Heart right ventricle (tissue), 16 donors: ENCODE measurements at regions of chr7 and their contacts with region 1.

Region 1: DNA sequence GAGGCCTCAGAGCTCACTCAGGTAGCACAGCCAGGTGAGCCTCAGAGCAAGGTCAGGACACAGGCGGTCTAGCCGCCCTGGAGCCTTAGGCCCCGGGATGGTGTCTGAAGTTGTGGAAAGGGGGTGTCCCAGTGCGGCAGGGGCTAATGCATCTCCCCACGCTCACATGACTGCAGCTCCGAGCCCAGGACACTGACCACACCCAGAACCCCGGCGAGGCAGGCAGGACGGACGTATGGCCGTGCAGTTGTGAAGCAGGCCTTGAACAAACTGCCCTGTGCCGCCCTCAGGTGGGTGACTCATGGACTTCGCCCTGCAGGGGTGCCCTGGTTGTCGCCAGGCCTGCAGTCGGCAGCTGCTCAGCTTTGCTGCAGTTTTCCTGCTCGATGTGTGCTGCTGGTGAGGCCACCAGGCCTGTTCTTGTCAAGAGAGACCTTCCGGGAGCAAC is 5.0 kb upstream of the PRKAR1B start:
- DNase-seq: peak; percentile 58 to 66
- ATAC-seq: peak; percentile 65 to 89 (median 82)
- H3K4me3 ChIP-seq: no peak overlapping the region
- H3K27ac ChIP-seq: peak overlapping the region; percentile 33 to 94 (median 88)
- H3K4me1 ChIP-seq: peaks cover 6 to 39% (median 26%) of the 10 kb centered on the region in 9 donors
- H3K27me3 ChIP-seq: no peaks in the 10 kb centered on the region
- CTCF ChIP-seq: peak in 8 of 9 donors; percentile 13 to 73 (median 48)

Region 2: DNA sequence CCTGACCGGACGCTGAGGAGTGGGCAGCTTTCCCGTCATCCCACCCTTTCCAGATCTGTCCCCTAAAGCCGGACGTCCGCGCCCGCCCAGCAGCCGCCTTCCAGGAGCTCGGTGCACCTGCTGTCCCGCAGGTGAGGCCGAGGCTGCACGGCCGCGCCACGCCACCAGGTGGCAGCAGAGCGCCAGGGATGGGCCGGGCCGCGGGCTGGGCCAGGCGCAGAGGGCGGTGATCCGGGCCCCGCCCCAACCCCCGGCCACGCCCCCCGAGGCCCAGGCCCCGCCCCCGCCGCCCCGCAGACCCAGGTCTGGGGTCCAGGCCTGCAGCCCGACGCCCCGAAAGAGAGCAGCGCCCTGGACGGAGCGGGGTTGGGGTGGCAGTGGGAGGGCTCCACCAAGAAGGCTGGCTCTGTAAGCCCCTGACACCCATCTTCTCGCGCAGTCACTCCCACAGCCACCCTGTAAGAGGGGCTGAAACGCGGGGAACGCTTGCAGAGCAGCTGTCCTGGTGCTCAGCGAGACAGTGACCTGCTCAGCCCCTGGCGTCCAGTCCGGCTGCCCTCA is 409.9 kb before region 1 on chr7:
- intact Hi-C with region 1: loop called in 1 of 10 experiments (anchors 5 kb)
- DNase-seq: peak; percentile 48 to 79
- ATAC-seq: peak; percentile 65 to 90 (median 80)
- H3K4me3 ChIP-seq: peak overlapping the region in 1 of 10 donors; percentile 20
- H3K27ac ChIP-seq: no peak overlapping the region
- H3K4me1 ChIP-seq: peaks cover 0 to 33% (median 5%) of the 10 kb centered on the region in 9 donors
- H3K27me3 ChIP-seq: peaks cover 0 to 25% (median 15%) of the 10 kb centered on the region in 7 donors
- CTCF ChIP-seq: peak; percentile 84 to 98 (median 95)

Region 3: DNA sequence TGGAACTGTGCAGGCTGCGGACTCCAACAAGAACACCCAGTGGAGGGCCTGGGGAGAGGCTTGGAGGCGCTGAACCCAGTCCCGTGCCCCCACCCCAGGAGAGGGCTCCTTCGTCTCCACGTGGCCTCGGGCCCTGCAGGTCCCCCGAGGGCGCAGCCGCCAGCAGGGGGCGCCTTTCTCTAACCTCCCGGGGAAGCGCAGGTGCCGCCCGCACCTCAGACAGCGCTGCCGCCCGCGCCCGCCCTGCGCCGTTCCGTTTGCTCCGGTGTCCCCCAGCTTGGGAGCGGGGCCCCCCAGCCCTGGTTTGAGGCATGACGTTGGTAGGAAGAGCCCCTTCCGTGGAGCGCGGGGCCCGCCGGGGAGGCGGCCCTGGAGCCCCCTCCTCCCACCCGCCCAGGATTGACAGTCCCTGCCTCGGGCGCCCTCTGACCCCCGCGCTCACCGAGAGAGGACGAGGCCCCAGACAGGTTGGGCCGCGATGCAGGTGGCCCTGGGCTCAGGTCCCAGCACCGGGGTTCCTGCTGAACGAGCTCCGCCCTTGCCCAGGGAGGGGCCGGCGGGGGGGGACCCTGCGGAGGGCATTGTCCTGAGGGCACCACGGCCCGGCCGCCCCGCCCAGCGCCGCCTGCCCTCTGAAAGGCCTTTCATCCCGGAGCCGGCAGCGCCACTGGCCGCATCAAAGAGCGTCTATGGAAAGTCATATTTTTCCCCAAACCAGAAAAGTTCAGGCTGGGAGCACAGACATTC is 399.3 kb before region 1 on chr7:
- intact Hi-C with region 1: loop called in 5 of 10 experiments (anchors 2 to 5 kb)
- DNase-seq: peak; percentile 75 to 86
- ATAC-seq: peak; percentile 86 to 94 (median 90)
- H3K4me3 ChIP-seq: peak overlapping the region in 9 of 10 donors; percentile 37 to 56 (median 50)
- H3K27ac ChIP-seq: peak overlapping the region; percentile 24 to 85 (median 76)
- H3K4me1 ChIP-seq: peaks cover 4 to 17% (median 12%) of the 10 kb centered on the region in 9 donors
- H3K27me3 ChIP-seq: peaks cover 0 to 15% (median 4%) of the 10 kb centered on the region in 7 donors
- CTCF ChIP-seq: peak; percentile 78 to 95 (median 91)

Region 4: GRCh38 chr7:471866-472639 is 260.1 kb before region 1 on chr7:
- intact Hi-C with region 1: no loop called
- DNase-seq: peak; percentile 83 to 84
- ATAC-seq: peak; percentile 67 to 94 (median 89)
- H3K4me3 ChIP-seq: no peak overlapping the region
- H3K27ac ChIP-seq: peak overlapping the region in 9 of 10 donors; percentile 17 to 72 (median 53)
- H3K4me1 ChIP-seq: peaks cover 6 to 25% (median 13%) of the 10 kb centered on the region in 9 donors
- H3K27me3 ChIP-seq: no peaks in the 10 kb centered on the region
- CTCF ChIP-seq: no peak

Region 5: DNA sequence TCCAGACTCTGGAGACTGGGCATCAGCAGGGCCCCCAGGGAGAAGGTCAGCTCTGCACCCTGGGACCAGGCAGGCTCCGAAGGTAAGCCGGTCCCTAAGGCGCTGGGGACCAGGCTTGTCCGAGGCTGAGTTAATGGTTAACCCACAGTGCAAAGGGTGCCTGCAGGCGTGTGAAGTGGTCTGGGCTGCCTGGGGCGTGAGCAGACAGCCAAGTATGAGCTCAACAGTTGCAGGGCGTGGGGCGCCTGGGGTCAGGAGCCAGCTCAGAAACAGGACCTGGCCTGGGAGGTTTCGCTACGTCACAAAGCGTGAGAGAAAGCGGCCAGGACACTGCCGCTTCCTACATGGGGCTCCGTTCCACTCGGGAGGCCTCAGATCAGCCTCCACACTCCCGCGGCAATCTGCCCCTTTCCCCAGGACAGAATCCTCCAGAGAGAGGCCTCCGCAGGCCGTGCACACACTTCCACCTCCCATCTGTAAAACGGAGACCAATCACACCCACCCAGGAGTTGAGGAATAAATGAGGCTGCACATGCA is 228.5 kb before region 1 on chr7:
- intact Hi-C with region 1: loop called in 1 of 10 experiments (anchors 10 kb)
- DNase-seq: peak; percentile 61 to 62
- ATAC-seq: peak; percentile 63 to 87 (median 81)
- H3K4me3 ChIP-seq: no peak overlapping the region
- H3K27ac ChIP-seq: peak overlapping the region in 7 of 10 donors; percentile 40 to 65 (median 57)
- H3K4me1 ChIP-seq: peaks cover 0 to 33% (median 23%) of the 10 kb centered on the region in 9 donors
- H3K27me3 ChIP-seq: no peaks in the 10 kb centered on the region
- CTCF ChIP-seq: no peak

Region 6: DNA sequence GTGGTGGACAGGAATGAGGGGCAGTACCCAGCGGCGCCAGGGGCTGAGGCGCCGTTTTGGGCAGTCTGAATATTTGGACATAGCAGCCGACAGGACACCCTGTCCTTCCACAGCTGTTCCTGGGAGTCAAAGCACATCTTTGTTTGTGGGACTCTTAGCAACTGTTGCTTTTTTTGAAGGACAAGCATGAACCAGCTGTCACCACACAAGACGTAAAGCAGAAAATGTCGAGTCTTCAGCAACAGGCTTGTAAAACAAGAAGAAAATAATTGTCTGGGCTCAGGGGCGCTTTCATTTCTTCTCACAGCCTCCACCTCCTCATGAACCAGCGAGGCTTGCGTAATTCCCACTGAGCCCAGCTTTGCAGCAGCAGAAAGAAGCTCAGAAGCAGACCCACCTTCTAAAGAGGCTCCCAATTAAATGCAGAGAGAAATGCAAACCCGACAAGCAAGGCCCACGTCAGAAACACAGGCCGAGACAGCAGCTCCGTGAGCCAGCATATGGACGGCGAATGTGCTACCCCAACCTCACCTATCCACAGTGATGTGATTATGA is 74.5 kb before region 1 on chr7:
- intact Hi-C with region 1: loop called in 1 of 10 experiments (anchors 5 kb)
- DNase-seq: no peak
- ATAC-seq: peak; percentile 78 to 97 (median 88)
- H3K4me3 ChIP-seq: peak overlapping the region in 1 of 10 donors; percentile 13
- H3K27ac ChIP-seq: peak overlapping the region in 9 of 10 donors; percentile 29 to 84 (median 73)
- H3K4me1 ChIP-seq: peaks cover 0 to 19% (median 6%) of the 10 kb centered on the region in 9 donors
- H3K27me3 ChIP-seq: no peaks in the 10 kb centered on the region
- CTCF ChIP-seq: no peak

Region 7: DNA sequence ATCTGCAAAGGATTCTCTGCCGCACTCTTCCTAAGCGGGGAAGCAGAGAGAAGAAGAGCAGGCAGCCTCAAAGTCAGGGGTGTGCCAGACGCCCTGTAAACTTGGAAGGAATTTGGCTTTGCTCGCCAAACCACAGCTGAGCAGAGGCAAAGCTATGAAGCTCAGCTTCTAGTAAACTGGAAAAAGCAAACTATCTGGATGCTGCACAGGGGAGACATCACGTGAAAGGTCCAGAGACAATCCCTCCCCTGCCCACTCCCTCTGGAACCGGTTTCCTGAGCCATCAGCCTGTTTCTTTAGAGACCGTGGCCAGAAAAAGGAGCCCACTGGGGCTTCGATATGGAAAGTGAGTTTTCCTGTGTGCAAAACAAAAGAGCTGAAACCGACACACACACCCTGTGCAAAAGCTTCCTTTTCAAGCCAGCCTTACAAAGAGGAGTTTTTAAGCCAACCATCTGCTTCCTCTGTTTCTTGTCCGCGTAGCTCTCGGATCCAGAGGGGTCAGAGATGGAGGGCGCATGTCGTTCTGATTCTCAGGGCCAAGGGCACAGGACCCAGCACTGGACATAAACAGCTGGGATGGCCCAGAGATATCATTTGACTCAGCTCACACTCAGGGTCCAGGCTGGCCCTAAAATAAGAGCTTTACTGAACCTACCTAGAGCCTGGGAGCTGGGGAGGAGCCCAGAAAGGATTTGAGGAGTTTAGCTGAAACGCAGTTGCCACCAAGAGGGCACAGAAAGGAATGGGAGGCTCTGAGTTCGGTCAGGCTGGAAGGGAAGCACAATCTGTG is 63.8 kb before region 1 on chr7:
- intact Hi-C with region 1: loop called in 3 of 10 experiments (anchors 5 kb)
- DNase-seq: peak in 1 of 2 donors; percentile 48
- ATAC-seq: peak in 7 of 8 donors; percentile 16 to 57 (median 37)
- H3K4me3 ChIP-seq: peak overlapping the region in 4 of 10 donors; percentile 5 to 15 (median 9)
- H3K27ac ChIP-seq: peak overlapping the region in 9 of 10 donors; percentile 45 to 84 (median 66)
- H3K4me1 ChIP-seq: peaks cover 20 to 51% (median 45%) of the 10 kb centered on the region in 9 donors
- H3K27me3 ChIP-seq: no peaks in the 10 kb centered on the region
- CTCF ChIP-seq: peak in 1 of 9 donors; percentile 6

Region 8: DNA sequence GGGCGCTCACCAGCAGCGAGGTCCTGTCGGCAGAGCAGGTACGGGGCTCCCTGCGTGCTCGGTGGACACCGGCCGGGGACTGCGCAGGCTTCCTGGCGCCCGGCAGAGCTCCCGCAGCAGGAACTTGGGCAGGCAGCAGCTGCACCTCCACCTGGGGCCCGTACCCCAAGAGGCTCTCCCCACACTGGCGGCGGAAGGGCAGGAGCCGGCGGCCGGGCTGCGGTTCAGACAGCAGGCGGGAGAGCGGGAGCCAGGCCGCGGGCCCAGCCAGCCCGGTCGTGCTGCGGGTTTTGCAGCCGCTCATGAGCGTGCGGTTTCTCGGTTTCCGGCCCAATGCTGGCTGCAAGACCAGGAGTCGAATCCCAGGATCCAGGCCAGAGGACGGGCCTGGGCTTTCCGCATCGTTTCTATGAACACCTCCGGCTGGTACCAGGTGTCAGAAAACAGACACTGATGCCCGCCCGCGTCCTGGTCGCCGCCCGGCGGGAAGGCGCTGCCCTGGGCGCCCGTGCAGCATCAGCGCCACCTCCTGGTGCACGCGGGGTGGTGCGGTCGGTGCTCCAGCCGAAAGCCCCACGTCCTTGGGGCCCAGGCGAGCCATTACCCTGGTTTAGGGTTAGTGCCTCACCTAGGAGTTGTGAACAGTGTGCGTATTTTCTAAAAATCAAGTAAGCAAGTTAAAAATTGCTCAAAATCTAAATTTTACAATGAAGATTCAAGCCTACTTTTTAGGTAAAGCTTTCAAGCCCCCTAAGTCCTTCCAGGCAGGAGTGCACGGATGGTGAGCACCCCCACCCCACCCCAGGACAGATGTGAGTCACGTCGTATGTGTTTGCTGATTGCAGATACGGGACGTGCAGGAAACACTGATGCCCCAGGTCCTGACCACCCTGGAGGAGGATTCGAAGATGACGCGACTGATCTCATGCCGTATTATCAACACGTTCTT is 42.3 kb after region 1 on chr7:
- intact Hi-C with region 1: loop called in 1 of 10 experiments (anchors 5 kb)
- DNase-seq: peak in 1 of 2 donors; percentile 66
- ATAC-seq: peak in 7 of 8 donors; percentile 15 to 55 (median 24)
- H3K4me3 ChIP-seq: no peak overlapping the region
- H3K27ac ChIP-seq: no peak overlapping the region
- H3K4me1 ChIP-seq: peaks cover 16 to 37% (median 21%) of the 10 kb centered on the region in 9 donors
- H3K27me3 ChIP-seq: no peaks in the 10 kb centered on the region
- CTCF ChIP-seq: peak; percentile 79 to 97 (median 93)